Breast epithelium (tissue), 4 donors: ENCODE measurements at regions of chr4 and their contacts with region 1.

Region 1: DNA sequence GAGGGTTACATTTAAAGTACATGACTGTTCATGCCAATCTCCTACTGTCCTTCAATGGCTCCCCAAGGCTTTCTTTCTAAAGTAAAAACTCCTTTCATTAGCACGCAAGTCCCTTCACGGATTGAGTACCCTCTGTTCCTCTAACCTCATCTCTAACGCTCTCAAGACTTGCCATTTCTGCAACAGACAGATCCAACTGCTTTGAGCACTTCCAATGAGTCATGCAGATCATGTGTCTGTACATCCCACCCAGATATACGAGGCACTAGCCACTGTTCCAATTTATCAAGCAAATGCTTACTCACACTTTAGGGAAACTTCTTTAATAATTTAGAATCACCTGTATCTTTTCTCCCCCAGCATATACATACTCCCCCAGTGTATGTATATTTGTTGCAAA is 332.5 kb upstream of the ZFP42 start:
- DNase-seq: no peak
- H3K4me3 ChIP-seq: no peak overlapping the region
- H3K27ac ChIP-seq: no peak overlapping the region
- H3K4me1 ChIP-seq: no peaks in the 10 kb centered on the region
- H3K27me3 ChIP-seq: no peaks in the 10 kb centered on the region
- CTCF ChIP-seq: no peak
- POLR2A ChIP-seq: no peak

Region 2: DNA sequence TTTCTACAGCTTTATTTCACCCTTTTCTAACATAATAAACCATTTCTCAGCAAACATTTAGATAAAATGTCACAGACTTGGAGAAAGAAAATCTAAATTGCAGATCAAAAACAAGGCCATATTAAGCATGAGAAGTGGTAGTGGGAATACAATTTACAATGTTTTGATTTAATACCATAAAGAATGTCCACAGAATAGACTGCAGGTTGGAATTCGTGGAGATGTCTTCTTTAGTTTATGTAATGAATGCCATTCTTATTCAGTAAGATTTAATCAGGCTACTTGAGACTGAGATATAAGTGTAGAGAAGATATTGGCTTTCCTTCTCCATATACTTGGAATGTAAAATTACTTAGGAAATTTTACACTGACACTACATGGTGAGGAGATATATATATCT is 240.6 kb after region 1 on chr4:
- intact Hi-C with region 1: loop called (anchors 5 kb)
- DNase-seq: no peak
- H3K4me3 ChIP-seq: no peak overlapping the region
- H3K27ac ChIP-seq: no peak overlapping the region
- H3K4me1 ChIP-seq: no peaks in the 10 kb centered on the region
- H3K27me3 ChIP-seq: no peaks in the 10 kb centered on the region
- CTCF ChIP-seq: no peak
- POLR2A ChIP-seq: no peak